Posterior cingulate gyrus (tissue), 11 donors: ENCODE measurements at regions of chr11 and their contacts with region 1.

Region 1: DNA sequence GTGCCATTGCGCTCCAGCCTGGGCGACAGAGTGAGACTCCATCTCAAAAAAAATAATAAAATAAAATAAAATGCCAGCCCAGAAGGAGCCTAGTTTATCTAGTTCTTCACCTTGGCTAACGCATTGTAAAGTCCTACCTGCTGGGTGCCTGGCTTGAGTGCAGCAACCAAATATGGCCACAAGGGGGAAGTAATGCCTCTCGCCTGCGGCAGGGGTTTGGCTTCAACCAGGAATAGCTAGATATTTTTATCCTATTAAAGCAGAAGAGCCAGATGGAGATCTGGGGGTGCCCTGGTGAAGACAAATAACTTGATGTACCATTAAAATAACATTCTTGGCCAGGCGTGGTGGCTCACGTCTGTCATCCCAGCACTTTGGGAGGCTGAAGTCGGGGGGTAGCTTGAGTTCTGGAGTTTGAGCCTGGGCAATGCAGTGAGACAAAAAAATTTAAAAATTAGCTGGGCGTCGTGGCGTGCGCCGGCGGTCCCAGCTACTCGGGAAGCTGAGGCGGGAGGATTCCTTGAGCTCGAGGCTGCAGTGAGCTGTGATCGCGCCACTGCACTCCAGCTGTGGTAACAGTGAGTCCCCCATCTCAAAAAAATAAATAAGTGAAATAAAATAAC is 20.6 kb upstream of the PLEKHB1 start:
- DNase-seq: peak; percentile 61 to 96 (median 82)

Region 2: DNA sequence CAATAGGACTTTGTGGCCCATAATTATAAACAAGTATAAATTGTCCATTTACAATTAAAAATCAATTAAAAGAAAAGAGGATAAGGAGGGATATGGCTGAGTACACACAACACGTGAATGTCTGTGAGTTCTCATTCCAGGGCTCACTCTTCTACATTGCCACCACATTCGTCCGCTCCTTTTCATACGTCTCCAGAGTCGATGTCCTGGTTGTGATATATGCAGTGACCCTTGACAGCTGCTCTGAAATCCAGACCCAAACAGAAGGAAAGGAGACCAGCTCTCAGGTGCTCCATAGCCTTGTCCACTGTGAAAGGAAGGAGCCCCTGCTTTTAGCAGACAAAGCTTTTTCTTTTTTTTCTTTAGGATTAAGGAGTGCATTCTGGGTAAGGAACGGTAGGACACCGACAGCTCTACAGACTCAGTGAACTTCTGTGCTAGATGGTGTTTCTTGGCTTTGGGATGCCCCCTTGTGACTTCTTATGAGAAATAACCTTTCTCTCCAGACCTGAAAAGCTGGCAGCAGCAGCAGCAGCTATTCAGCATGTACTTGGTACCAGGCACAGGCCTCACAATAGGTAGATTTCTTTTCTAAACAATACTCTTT is 305.3 kb after region 1 on chr11:
- intact Hi-C with region 1: loop called (anchors 5 kb)
- DNase-seq: peak in 3 of 10 donors; percentile 11 to 47 (median 11)